ENCODE measurements at regions of chr19 and their contacts with region 1.

Region 1: GRCh38 chr19:13093407-13094105 is 9.1 kb downstream of the LYL1 start:
- DNase-seq: peak; percentile 85
- H3K4me3 ChIP-seq: no peak overlapping the region
- H3K27ac ChIP-seq: no peak overlapping the region
- H3K4me1 ChIP-seq: peaks cover 42% of the 10 kb centered on the region
- CTCF ChIP-seq: peak; percentile 92

Region 2: GRCh38 chr19:12965017-12965811 is 128.3 kb before region 1 on chr19:
- CTCF ChIA-PET with region 1: interaction called, 13 read pairs
- POLR2A ChIA-PET with region 1: no interaction called
- intact Hi-C with region 1: no loop called
- DNase-seq: peak; percentile 85
- H3K4me3 ChIP-seq: peak overlapping the region; percentile 65
- H3K27ac ChIP-seq: peak overlapping the region; percentile 54
- H3K4me1 ChIP-seq: peaks cover 6% of the 10 kb centered on the region
- CTCF ChIP-seq: peak; percentile 95

Region 3: GRCh38 chr19:12974301-12975220 is 119.0 kb before region 1 on chr19:
- CTCF ChIA-PET with region 1: interaction called, 10 read pairs
- POLR2A ChIA-PET with region 1: interaction called, 8 read pairs
- intact Hi-C with region 1: loop called (anchors 1 kb)
- DNase-seq: no peak
- H3K4me3 ChIP-seq: no peak overlapping the region
- H3K27ac ChIP-seq: no peak overlapping the region
- H3K4me1 ChIP-seq: no peaks in the 10 kb centered on the region
- CTCF ChIP-seq: no peak

Region 4: DNA sequence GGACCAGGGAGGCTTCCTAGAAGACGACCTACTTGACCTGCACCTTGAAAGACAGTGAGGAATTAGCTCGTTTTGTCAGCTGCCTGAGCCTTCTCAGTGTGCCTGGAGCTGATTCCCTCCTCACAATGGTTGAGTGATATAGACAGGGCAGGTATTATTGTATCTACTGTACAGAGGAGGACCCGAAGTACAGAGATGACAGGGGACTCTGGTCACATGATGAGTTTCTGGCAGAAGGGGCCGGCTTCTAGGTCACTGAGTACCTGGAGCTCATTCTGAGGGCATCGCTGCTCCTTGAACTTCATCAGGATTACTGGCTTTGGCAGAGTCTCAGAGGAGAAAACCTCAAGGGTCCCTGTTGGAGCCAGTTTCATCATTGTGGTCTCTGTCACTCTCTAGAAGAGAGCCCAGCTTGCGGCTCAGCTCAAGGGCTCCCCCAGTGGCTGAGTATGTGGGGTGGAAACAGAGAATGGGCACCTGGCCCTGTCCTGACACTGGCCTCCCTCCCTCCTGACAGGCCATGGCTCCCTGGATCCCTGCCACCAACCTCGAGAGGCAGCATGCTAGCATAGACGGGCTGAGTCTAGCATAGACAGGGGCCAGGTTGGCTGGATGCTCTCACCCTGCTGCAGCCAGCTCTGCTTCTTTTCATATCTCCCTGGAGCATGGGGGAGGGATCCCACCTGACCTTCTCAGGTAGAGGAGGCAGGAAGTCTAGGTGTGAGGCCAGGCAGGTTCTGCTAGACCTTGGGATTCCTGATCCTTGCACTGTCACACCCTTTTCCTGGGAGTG is 59.5 kb before region 1 on chr19:
- CTCF ChIA-PET with region 1: no interaction called
- POLR2A ChIA-PET with region 1: no interaction called
- intact Hi-C with region 1: loop called (anchors 5 kb)
- DNase-seq: peak; percentile 54
- H3K4me3 ChIP-seq: no peak overlapping the region
- H3K27ac ChIP-seq: no peak overlapping the region
- H3K4me1 ChIP-seq: no peaks in the 10 kb centered on the region
- CTCF ChIP-seq: peak; percentile 91

Region 5: DNA sequence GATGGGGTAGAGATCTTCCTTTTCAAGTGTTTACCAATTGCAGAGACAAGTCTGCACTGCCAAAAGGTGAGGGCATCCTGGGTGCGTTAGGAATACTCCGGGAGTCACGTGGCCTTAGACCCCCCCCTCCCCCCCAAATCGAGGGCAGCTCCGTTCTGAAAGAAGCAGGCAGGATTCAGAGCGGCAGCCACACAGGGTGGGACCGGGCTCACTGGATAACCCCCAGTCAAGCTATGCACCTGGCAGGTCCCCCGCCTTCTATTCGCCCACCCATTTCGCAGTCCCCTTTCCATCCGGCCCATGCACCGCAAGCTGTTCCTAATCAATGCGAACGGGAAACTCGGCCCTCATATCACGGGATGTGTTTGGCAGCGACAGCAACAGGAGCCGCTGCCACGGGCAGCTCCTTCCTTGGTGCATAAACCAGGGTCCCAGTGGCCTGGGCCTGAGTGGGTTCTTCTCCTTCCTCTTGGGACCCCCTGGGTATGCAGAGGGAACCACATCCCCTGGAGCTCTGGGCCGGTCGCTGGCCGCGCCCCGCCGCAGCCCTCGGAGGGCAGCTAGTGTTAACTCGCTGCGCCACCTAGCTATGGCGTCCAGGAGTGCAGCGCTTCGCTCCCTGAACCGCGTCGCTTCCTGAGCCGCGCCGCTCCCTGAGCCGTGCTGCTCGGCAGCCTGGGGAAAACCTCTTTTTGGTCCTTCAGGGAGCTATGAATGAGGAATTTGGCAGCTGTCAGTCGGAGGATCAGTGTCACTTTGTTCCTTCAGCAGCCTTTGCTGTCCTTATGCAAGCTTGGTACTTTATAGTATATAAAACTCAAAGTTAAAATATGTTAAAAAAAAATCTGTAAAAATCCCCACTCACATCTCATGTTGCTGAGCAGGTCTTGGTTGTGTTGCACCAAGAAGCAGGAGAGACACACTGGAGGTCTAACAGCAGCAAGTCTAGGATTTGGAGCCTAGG is 32.3 kb before region 1 on chr19:
- CTCF ChIA-PET with region 1: no interaction called
- POLR2A ChIA-PET with region 1: interaction called, 3 read pairs
- intact Hi-C with region 1: loop called (anchors 2 kb)
- DNase-seq: peak; percentile 86
- H3K4me3 ChIP-seq: peak overlapping the region; percentile 61
- H3K27ac ChIP-seq: no peak overlapping the region
- H3K4me1 ChIP-seq: peaks cover 29% of the 10 kb centered on the region
- CTCF ChIP-seq: peak; percentile 95

Region 6: GRCh38 chr19:13104360-13104847 is 10.8 kb after region 1 on chr19:
- CTCF ChIA-PET with region 1: interaction called, 11 read pairs
- POLR2A ChIA-PET with region 1: interaction called, 3 read pairs
- intact Hi-C with region 1: no loop called
- DNase-seq: peak; percentile 96
- H3K4me3 ChIP-seq: peak overlapping the region; percentile 83
- H3K27ac ChIP-seq: peak overlapping the region; percentile 96
- H3K4me1 ChIP-seq: peaks cover 60% of the 10 kb centered on the region
- CTCF ChIP-seq: peak; percentile 85